ENCODE measurements at regions of chr10 and their contacts with region 1.

Region 1: DNA sequence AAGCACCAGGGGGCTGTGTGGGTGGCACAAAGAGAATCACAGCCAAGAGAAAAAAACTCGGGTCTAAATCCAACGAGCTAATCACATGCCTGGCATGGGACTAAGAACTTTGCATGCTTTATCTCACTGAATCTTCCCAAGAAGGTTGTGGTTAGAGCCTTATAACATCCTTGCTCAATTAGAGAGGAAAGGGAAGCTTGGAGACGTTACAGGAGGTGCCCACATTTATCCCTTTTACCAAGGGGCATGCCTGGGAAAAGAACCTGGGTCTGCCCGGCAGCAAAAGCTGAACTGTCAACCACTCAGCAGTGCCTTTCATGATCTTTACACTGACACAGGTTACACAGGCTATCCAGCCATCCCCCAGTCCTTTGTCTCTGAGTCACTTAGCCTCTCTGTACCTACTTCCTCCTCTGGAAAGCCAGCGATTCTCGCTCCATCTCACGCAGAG is 190.1 kb downstream of the PRPF18 start:
- DNase-seq: no peak
- ATAC-seq: no peak
- H3K4me3 ChIP-seq: no peak overlapping the region
- H3K27ac ChIP-seq: no peak overlapping the region
- H3K4me1 ChIP-seq: no peaks in the 10 kb centered on the region
- H3K27me3 ChIP-seq: peaks cover 27 to 31% of the 10 kb centered on the region in 2 experiments; a peak in 4 of 5 replicates
- CTCF ChIP-seq: no peak
- EP300 ChIP-seq: no peak
- POLR2A ChIP-seq: no peak
- RAD21 ChIP-seq: no peak

Region 2: GRCh38 chr10:13299437-13300287 is 477.2 kb before region 1 on chr10 and contains the start of gene PHYH:
- CTCF ChIA-PET with region 1: no interaction called
- POLR2A ChIA-PET with region 1: no interaction called
- in situ Hi-C with region 1: no loop called
- intact Hi-C with region 1: no loop called
- DNase-seq: peak; percentile 83 to 90 (median 88)
- ATAC-seq: peak; percentile 89
- H3K4me3 ChIP-seq: peak within 1 kb of the TSS; percentile 58
- H3K27ac ChIP-seq: peak within 1 kb of the TSS; percentile 69
- H3K4me1 ChIP-seq: peaks cover 8 to 32% of the 10 kb centered on the region in 2 experiments; a peak in 3 of 5 replicates
- H3K27me3 ChIP-seq: no peaks in the 10 kb centered on the region
- CTCF ChIP-seq: no peak
- EP300 ChIP-seq: no peak; the same call in 1 of the 2 replicates
- POLR2A ChIP-seq: peak; percentile 69
- RAD21 ChIP-seq: no peak
- polyA plus RNA-seq, gene PHYH: 6.3 to 6.9 TPM

Region 3: DNA sequence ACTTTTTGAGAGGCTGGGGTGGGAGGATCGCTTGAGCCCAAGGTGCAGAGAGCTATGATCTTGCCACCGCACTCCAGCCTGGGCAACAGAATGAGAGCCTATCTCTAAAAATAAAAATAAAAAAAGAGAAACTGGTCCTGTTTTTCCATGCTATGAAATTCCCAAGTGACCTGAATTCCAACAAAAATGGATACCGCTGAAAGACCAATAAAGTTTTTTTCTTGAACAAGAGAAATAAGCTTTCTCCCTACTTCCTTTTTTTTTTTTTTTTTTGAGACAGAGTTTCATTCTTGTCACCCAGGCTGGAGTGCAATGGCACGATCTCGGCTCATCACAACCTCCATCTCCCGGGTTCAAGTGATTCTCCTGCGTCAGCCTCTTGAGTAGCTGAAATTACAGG is 416.3 kb before region 1 on chr10:
- CTCF ChIA-PET with region 1: no interaction called
- POLR2A ChIA-PET with region 1: no interaction called
- in situ Hi-C with region 1: loop called (anchors 5 kb)
- intact Hi-C with region 1: no loop called
- DNase-seq: no peak
- ATAC-seq: no peak
- H3K4me3 ChIP-seq: no peak overlapping the region
- H3K27ac ChIP-seq: no peak overlapping the region
- H3K4me1 ChIP-seq: no peaks in the 10 kb centered on the region; a peak in 2 of 5 replicates
- H3K27me3 ChIP-seq: peaks cover 3 to 26% of the 10 kb centered on the region in 2 experiments; a peak in 4 of 5 replicates
- CTCF ChIP-seq: no peak
- EP300 ChIP-seq: no peak
- POLR2A ChIP-seq: no peak
- RAD21 ChIP-seq: no peak

Region 4: DNA sequence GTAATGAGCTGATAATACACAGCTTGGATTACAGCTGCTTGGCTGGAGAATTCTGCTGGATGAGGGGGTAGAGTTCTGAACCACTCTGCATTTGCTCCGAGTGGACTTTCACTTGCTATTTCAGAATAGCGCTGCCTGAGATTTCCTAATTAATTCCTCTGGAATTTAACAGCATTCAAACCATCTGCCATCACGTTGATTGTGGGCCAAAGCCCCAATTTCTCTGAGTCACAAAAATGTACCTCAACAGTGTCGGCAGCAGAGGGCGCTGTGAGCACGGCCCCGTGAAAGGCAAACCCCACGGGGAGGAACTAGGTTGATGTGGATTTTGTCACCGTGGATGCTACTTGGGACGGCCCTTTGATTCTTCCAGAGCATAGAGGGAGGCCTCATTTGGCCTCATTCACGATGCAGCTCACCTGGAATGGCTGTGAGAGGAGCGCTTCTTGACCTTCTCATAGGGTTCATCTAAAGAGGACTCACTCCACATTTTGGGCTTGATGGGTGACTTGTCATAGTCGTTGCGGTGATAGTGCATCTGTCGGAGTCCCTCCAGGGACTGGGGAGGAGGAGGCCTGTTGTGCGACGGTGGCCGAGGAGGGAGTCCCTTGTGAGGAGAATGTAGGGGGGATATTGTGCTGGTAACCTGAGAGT is 116.9 kb before region 1 on chr10:
- CTCF ChIA-PET with region 1: interaction called, 23 read pairs
- POLR2A ChIA-PET with region 1: no interaction called
- in situ Hi-C with region 1: no loop called
- intact Hi-C with region 1: loop called (anchors 1 kb)
- DNase-seq: peak; percentile 67 to 80 (median 79)
- ATAC-seq: peak; percentile 90
- H3K4me3 ChIP-seq: no peak overlapping the region
- H3K27ac ChIP-seq: no peak overlapping the region
- H3K4me1 ChIP-seq: peaks cover 0 to 3% of the 10 kb centered on the region in 2 experiments; a peak in 1 of 5 replicates
- H3K27me3 ChIP-seq: no peaks in the 10 kb centered on the region; a peak in 1 of 5 replicates
- CTCF ChIP-seq: peak; percentile 90 to 91 (median 91)
- EP300 ChIP-seq: no peak
- POLR2A ChIP-seq: no peak
- RAD21 ChIP-seq: peak; percentile 83 to 96

Region 5: GRCh38 chr10:13684252-13684791 is 92.6 kb before region 1 on chr10:
- CTCF ChIA-PET with region 1: no interaction called
- POLR2A ChIA-PET with region 1: no interaction called
- in situ Hi-C with region 1: no loop called
- intact Hi-C with region 1: no loop called
- DNase-seq: no peak
- ATAC-seq: no peak
- H3K4me3 ChIP-seq: no peak overlapping the region
- H3K27ac ChIP-seq: no peak overlapping the region
- H3K4me1 ChIP-seq: no peaks in the 10 kb centered on the region
- H3K27me3 ChIP-seq: no peaks in the 10 kb centered on the region
- CTCF ChIP-seq: no peak
- EP300 ChIP-seq: no peak
- POLR2A ChIP-seq: no peak
- RAD21 ChIP-seq: no peak

Region 6: DNA sequence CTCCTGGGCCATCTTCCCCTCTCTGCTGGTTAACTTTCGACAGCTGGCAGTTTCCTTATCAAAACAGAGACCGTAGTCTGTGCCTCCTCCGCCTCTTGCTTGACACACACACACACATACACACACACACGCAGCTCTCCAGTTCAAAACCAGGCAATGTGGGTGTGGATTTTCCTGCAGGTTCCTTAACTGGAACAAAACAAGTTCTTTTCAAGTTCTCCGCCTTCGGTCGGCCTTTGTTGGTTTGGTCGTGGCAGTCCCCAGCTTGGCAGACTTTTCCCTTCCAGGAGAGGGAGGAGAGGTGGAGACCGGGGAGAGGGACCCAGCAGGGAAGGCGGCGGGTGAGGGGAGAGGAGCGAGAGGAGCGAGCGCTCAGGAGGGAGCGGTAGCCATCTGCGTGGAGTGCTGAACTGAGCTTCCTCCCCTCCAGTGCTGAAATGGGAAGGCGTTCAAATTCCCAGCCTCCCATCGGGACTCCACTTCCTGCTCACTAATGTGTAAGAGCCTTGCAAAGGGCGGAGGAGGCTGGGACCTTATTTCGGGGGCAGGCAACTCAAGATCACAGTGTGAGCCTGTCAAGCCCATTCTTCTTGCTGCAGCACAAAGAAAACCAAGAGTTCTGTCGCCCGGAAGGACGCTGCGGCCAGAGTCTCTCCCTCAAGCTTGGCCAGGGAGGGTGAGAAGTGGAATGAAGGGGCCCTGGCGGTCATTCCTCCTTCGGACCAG is 69.6 kb before region 1 on chr10:
- CTCF ChIA-PET with region 1: no interaction called
- POLR2A ChIA-PET with region 1: no interaction called
- in situ Hi-C with region 1: no loop called
- intact Hi-C with region 1: loop called (anchors 5 kb)
- DNase-seq: peak; percentile 61 to 84 (median 64)
- ATAC-seq: peak; percentile 61
- H3K4me3 ChIP-seq: peak overlapping the region; percentile 41
- H3K27ac ChIP-seq: peak overlapping the region; percentile 56
- H3K4me1 ChIP-seq: peaks cover 31 to 36% of the 10 kb centered on the region in 2 experiments; a peak in 3 of 5 replicates
- H3K27me3 ChIP-seq: no peaks in the 10 kb centered on the region
- CTCF ChIP-seq: no peak
- EP300 ChIP-seq: peak; percentile 32; the same call in 1 of the 2 replicates
- POLR2A ChIP-seq: peak; percentile 39; the same call in 1 of the 2 replicates
- RAD21 ChIP-seq: no peak

Region 7: DNA sequence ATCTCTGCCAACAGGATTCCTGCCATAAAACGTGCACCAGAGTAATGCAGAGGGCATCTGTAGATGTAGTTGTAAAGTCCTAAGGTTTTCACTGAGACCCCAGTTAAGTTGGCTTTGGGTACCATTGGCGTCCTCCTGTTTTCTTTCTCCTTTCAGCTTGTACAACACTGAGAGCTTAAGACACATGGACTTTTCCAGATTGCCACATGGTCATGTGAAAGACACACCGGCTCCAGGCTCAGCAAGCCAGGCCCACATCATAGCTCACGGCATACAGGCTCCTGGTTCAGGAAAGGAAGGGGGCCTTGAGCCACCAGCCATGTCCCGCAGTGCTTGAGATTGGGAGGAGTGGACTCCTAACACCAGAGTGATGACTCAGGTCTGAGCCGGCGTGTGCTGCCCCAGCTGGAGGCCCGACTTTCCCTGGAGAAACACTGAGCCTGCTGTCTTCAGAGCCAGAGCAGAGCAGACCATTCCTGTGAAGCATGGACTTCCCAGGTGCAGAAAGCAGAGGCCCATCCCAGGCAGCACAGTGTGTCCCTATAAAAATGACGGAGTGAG is 62.6 kb after region 1 on chr10:
- CTCF ChIA-PET with region 1: no interaction called
- POLR2A ChIA-PET with region 1: no interaction called
- in situ Hi-C with region 1: no loop called
- intact Hi-C with region 1: no loop called
- DNase-seq: no peak
- ATAC-seq: no peak; the same call in 2 of the 3 replicates
- H3K4me3 ChIP-seq: no peak overlapping the region
- H3K27ac ChIP-seq: no peak overlapping the region
- H3K4me1 ChIP-seq: no peaks in the 10 kb centered on the region
- H3K27me3 ChIP-seq: peaks cover 3 to 6% of the 10 kb centered on the region in 2 experiments; a peak in 2 of 5 replicates
- CTCF ChIP-seq: no peak
- EP300 ChIP-seq: no peak
- POLR2A ChIP-seq: no peak
- RAD21 ChIP-seq: no peak

Region 8: DNA sequence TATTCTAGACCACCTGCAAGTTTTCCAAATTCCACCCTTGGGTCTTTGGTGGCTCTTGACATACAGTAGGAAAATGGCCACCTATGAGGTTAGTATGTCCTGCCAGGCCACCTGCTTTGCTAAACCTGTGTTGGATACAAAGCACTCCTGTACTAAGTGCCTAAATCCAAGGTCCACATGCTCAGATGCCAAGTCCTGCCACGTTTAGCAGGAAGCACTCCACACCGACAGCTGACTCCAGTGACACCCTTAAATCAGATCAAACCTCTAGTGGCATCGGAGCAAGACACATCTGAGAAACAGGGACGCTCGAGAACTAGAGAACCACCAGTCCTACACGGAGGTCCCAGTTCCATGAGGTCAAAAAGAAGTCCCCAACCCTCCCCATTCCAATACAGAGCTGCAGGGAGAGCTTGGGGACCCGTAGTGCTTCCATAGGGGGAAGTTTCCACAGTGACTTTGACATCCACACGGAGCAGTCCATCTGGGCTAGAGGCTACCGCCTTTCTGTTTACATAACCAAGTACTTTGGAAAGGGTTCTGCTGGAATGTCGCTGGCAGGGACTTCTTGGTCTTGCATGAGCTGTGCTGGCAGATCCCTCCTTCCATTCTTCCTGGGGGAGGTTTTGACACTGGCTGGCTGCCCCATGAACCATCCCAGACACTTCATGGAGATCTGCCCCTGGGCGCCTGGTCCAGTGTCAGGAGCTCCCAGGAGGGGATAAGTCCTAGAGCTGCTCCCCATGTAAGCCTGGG is 100.4 kb after region 1 on chr10:
- CTCF ChIA-PET with region 1: no interaction called
- POLR2A ChIA-PET with region 1: no interaction called
- in situ Hi-C with region 1: no loop called
- intact Hi-C with region 1: no loop called
- DNase-seq: no peak
- ATAC-seq: no peak
- H3K4me3 ChIP-seq: no peak overlapping the region
- H3K27ac ChIP-seq: no peak overlapping the region
- H3K4me1 ChIP-seq: no peaks in the 10 kb centered on the region
- H3K27me3 ChIP-seq: peaks cover 8 to 23% of the 10 kb centered on the region in 2 experiments; a peak in 4 of 5 replicates
- CTCF ChIP-seq: no peak
- EP300 ChIP-seq: no peak
- POLR2A ChIP-seq: no peak
- RAD21 ChIP-seq: no peak